Mucosa of descending colon (tissue), 3 donors: ENCODE measurements at regions of chr10 and their contacts with region 1.

Region 1: DNA sequence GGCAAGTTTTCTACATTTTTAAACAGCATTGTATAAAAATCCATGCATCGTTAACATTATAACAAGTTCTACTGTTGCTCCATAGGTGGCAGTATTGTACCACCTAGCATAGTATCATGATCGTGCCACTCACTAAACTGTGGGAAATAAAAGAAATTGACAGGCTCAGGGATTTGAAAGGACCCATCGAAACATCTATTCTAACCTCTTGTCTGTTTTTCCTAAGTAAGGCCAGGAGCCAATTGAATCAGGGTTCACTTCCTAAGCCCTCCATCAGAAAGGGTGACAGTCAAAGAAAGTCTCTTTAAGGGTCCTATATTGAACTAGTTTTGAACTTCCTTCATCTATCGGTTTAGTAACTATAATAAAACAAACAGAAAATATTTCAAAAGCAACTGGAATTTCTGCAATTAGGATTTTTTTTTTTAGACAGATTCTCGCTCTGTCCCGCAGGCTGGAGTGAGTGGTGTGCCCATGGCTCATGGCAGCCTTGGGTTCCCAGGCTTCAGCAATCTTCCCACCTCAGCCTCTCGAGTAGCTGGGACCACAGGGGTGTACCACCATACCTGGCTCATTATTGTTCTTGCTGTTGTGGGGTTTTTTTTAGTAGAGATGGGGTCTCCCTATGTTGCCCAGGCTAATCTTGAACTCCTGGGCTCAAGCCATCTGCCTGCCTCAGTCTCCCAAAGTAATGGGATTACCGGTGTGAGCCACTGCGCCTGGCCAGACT is 9.4 kb downstream of the HACD1 start:
- DNase-seq: peak in 1 of 3 donors; percentile 24
- ATAC-seq: peak; percentile 80
- H3K4me3 ChIP-seq: no peak overlapping the region
- H3K4me1 ChIP-seq: no peaks in the 10 kb centered on the region
- CTCF ChIP-seq: peak; percentile 66

Region 2: DNA sequence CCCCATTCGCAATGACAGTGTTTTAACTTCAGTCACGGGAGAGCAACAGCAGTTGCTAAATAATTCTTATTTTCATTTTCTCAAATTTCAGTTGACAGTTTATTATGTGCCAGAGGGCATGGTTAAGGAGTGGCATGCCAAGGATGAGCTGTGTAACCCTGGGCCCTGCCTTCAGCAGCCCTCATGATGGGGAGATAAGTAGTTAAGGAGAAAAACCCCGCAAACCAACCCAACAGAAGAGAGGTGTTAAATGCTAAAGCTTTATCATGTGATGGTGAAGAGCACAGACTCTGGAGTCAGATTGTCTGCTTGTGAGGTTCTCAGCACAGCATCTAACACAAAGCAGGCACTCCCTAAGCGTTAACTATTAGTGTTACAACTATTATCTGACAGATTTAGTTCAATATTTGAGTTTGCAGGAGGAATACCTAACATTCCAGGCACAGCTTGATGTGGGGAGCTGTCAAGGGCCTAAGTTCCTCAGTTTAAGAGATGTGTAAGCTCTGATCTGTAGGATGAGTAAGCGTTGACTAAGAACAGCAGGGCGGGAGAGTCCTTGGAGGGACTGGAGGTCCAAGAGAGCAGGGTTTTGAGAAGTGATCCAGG is 65.8 kb after region 1 on chr10:
- intact Hi-C with region 1: no loop called
- DNase-seq: no peak
- ATAC-seq: peak; percentile 30
- H3K4me3 ChIP-seq: no peak overlapping the region
- H3K4me1 ChIP-seq: no peaks in the 10 kb centered on the region
- CTCF ChIP-seq: no peak

Region 3: DNA sequence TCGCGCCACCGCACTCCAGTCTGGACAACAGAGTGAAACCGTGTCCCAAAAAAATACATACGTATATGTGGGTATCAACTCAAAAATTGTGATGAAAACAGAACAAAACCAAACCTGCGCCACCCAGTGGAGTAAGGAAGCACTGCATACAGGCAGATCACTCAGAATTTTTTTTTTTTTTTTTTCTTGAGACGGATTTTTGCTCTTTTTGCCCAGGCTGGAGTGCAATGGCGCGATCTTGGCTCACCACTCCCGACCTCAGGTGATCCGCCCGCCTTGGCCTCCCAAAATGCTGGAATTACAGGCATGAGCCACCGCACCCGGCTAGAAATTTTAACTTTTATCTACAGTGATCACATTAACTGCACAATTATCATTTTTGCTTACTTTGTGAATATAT is 135.2 kb after region 1 on chr10:
- intact Hi-C with region 1: loop called (anchors 5 to 10 kb)
- DNase-seq: peak in 2 of 3 donors; percentile 66 to 80
- ATAC-seq: peak; percentile 61
- H3K4me3 ChIP-seq: no peak overlapping the region
- H3K4me1 ChIP-seq: peaks cover 5% of the 10 kb centered on the region
- CTCF ChIP-seq: peak; percentile 80

Region 4: GRCh38 chr10:17747883-17748550 is 140.2 kb after region 1 on chr10:
- intact Hi-C with region 1: loop called (anchors 5 to 10 kb)
- DNase-seq: no peak
- ATAC-seq: no peak
- H3K4me3 ChIP-seq: no peak overlapping the region
- H3K4me1 ChIP-seq: no peaks in the 10 kb centered on the region
- CTCF ChIP-seq: no peak

Region 5: GRCh38 chr10:17787078-17787961 is 179.6 kb after region 1 on chr10:
- intact Hi-C with region 1: no loop called
- DNase-seq: no peak
- ATAC-seq: peak; percentile 35
- H3K4me3 ChIP-seq: no peak overlapping the region
- H3K4me1 ChIP-seq: peaks cover 2% of the 10 kb centered on the region
- CTCF ChIP-seq: no peak